ENCODE measurements at regions of chr17 and their contacts with region 1.

Region 1: GRCh38 chr17:59753522-59754467 is 46.3 kb downstream of the VMP1 start:
- DNase-seq: no peak

Region 2: DNA sequence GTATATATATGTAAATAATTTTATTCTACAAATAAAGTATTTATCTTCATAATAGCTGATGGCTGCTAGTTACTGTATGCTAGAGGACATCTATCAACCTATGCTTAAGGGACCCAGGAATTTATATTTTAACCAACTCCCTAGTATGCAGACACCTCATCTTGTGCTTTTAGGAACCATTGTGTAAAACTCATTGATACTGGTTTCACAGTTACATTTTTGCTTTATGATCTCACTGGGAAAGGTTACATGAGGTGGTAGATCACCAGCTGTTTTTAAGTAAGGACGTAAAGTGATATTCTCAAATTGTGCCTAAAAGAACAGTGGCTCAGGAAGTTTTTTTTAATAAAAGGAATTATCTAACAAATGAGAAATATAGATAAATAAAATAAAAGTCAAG is 10.1 kb after region 1 on chr17:
- intact Hi-C with region 1: no loop called
- DNase-seq: no peak

Region 3: GRCh38 chr17:59786536-59787319 is 32.9 kb after region 1 on chr17:
- intact Hi-C with region 1: loop called (anchors 5 kb)
- DNase-seq: no peak

Region 4: DNA sequence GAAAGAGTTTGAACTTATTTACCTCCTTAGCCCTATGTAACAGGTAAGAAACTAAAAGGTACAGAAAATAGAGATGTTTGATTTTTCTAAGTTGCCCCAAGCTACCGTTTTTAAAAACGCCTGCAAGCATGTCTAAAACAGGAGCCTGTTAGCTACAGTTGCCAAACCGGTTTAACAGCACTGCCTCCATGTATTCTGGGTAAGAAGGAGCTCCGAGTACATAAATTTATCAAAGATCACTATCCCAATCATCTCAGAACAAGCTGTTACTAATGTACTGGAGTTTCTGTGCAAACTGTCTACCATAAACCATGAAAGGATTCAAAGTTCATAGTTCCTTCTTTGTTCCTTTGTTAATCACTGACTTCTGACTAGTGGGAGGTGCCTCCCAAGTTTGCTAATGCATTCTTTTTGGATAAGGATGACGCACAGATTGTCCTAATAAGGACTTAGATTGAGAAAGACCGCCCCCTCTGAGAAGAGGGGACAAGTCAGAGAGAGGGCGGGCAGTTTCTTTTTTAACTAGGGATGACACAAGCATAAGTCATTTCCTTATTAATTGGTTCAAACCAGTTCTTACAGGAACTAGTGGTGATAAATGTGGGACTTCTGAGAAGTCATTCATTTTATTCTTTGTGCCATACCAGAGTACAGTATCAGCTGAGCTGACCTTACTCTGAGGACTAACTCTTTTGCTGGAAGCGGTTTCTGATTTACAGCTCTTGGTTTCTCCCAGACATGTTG is 83.7 kb after region 1 on chr17:
- intact Hi-C with region 1: loop called (anchors 2 kb)
- DNase-seq: no peak

Region 5: DNA sequence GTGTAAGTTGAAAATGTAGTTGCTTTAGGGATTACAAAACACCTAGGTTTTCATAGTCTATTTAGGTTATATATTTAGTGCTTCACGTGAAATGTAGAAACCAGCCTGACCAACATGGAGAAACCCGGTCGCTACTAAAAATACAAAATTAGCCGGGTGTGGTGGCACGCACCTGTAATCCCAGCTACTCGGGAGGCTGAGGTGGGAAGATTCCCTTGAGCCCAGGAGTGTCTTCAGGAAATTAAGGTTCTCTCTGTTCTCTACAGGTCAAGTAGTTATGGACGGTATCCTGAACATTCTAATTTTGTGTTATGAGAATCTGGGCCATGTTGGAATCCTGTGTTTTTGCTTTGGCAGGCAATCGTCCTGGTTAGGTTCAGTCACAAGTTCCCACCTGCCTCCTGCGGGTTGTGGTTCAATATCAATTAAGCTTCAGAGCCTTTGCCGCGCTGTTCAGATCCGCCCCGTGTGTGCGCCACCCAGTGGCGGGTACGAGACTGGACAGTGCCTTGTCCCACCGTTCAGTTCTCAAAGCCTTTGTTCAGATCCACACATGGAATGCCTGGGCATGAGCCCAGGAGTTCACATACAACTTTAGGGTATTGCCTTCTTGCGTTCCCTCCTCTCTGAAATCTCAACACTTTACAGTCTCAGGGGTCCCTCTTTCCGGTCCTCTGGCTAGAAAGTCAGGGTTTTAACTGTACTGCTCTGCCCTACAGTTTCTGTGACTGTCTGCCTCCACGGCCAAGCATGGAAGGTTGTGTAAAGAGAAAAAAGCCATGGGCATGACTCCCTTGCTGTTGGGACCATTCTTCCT is 283.2 kb after region 1 on chr17:
- intact Hi-C with region 1: loop called (anchors 10 kb)
- DNase-seq: peak; percentile 79

Region 6: GRCh38 chr17:60102632-60103096 is 348.9 kb after region 1 on chr17:
- intact Hi-C with region 1: no loop called
- DNase-seq: peak; percentile 76